ENCODE measurements at regions of chr12 and their contacts with region 1.

Region 1: DNA sequence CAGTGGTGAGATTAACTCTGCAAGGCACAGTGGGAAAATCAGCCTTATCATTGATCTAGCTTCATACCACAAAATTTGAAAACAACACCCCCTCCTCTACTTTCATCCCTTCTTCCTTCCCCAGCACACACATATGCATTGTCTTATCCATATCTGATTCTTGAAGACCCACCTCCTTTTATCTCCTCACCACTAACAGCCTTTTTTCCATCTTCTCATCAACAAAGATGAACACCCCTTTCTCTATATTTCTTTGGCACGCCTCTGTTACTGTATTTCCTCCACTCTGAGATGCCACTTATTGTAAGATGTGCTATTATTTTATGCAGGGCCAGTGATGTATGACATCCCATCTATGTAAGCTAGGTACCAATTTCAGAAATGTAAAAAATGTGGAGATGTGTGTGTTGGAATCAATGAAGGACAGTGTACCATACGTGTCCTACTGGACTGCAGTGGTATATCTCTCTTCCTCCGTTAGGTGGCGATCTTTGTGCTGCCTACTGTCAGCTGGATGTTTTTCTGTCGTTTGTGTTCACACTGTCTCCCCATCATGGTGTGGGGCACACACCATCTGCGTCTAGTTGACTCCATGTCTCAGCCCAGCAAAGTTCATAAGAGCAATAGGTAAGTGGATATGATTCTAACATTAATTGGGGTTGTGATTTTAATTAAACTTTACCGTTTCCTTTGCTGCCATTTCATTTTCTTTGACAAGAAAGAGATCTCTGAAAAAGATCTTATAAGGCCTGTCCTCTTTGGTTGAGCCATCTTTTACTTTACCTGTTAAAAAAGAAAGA is 24.0 kb downstream of the CCDC38 start:
- DNase-seq: peak; percentile 67
- ATAC-seq: peak; percentile 96
- H3K4me3 Mint-ChIP-seq: no peak overlapping the region
- H3K27ac Mint-ChIP-seq: no peak overlapping the region
- H3K4me1 Mint-ChIP-seq: no peaks in the 10 kb centered on the region
- H3K27me3 Mint-ChIP-seq: peaks cover 26% of the 10 kb centered on the region

Region 2: DNA sequence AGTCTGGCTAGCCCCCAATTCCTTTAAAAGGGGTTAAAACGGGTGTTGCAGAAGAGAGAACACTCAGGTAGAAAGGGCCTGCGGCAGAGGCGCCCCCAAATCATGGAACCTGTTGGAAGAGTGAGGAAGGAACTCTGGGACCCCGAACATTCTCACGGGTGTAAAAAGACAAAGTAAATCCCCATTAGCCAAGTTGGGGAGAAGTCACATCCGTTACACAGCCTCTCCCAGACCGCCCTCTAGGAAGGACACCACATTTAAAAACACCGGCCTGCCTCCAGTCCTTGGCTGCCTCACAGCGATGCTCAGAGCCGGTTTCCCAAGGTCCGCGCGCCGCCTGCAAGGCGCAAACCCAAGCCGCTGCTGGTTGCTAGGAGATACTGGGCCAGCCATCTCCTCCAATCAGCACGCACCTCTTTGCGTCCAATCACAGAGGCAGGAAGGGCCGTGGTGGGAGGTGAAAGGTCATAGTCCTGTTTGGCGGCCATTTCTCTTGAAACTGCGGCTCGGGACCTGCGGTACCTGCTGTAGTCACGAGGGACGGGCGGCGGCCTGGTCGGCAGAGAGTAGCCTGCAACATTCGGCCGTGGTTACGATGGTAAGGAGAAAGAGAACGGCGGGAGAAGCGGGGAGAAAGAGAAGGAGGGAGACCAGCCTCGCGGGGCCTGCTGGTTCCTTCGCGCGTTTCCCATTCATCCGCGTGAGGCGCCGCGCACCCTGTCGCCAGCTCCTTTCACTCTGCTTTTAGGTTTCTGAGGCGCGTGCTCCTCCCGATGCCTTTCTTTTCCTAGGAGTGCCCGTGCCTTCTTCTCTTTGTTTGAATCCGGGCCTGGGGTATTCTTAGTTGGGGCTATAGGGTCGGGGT is 59.7 kb before region 1 on chr12 and contains the start of gene SNRPF:
- CTCF ChIA-PET with region 1: no interaction called
- DNase-seq: peak; percentile 97
- ATAC-seq: peak; percentile 94
- H3K4me3 Mint-ChIP-seq: no peak within 1 kb of the TSS
- H3K27ac Mint-ChIP-seq: no peak within 1 kb of the TSS
- H3K4me1 Mint-ChIP-seq: peaks cover 31% of the 10 kb centered on the region
- H3K27me3 Mint-ChIP-seq: peaks cover 9% of the 10 kb centered on the region
- total RNA-seq, gene SNRPF: 36.6 to 38.3 TPM

Region 3: GRCh38 chr12:95882080-95882479 is 36.3 kb before region 1 on chr12:
- CTCF ChIA-PET with region 1: no interaction called
- DNase-seq: no peak
- ATAC-seq: no peak
- H3K4me3 Mint-ChIP-seq: no peak overlapping the region
- H3K27ac Mint-ChIP-seq: no peak overlapping the region
- H3K4me1 Mint-ChIP-seq: no peaks in the 10 kb centered on the region
- H3K27me3 Mint-ChIP-seq: no peaks in the 10 kb centered on the region

Region 4: DNA sequence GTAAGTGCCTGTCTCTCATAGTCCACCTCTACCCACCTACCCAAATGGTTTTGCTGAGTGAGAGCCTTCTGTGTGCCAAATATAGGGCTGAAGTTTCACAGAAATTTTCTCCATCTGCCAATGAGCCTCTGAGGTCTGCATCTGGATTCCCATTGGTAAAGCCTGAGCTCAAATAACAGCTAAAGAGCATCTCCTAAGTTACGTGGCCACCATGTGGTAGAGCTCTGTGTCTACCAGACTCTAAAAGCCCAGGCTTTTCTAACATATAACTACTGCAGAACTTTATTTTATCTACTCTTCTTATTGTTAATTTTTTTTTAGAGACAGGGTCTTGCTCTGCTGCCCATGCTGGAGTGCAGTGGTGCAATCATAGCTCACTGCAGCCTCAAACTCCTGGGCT is 40.7 kb after region 1 on chr12:
- CTCF ChIA-PET with region 1: interaction called, 12 read pairs
- DNase-seq: no peak
- ATAC-seq: no peak
- H3K4me3 Mint-ChIP-seq: no peak overlapping the region
- H3K27ac Mint-ChIP-seq: no peak overlapping the region
- H3K4me1 Mint-ChIP-seq: no peaks in the 10 kb centered on the region
- H3K27me3 Mint-ChIP-seq: no peaks in the 10 kb centered on the region

Region 5: GRCh38 chr12:95998611-95999286 is 80.4 kb after region 1 on chr12:
- CTCF ChIA-PET with region 1: interaction called, 71 read pairs
- DNase-seq: peak; percentile 73
- ATAC-seq: peak; percentile 99
- H3K4me3 Mint-ChIP-seq: no peak overlapping the region
- H3K27ac Mint-ChIP-seq: peak overlapping the region; percentile 52
- H3K4me1 Mint-ChIP-seq: peaks cover 11% of the 10 kb centered on the region
- H3K27me3 Mint-ChIP-seq: no peaks in the 10 kb centered on the region